ENCODE measurements at regions of chr7 and their contacts with region 1.

Region 1: DNA sequence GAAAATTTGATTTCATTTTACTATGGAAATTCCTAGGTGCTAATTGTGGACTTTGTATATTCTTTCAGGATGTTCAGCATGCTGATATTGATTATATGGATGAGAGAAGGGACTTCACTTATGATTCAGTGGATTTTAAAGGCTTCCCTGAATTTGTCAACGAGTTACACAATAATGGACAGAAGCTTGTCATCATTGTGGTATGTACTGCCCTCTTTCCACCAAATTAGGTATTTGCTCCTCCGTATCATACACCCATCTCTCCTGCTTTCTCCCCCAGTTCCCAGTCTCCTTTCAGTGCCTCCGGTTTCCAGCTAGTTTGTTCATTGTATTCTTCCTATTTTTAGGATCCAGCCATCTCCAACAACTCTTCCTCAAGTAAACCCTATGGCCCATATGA is 34.6 kb downstream of the MGAM start:
- DNase-seq: peak in 1 of 2 experiments; percentile 21
- H3K4me3 ChIP-seq: no peak overlapping the region
- H3K4me3 Mint-ChIP-seq: no peak overlapping the region
- H3K27ac Mint-ChIP-seq: no peak overlapping the region
- H3K4me1 ChIP-seq: peaks cover 4% of the 10 kb centered on the region; the same call in 1 of the 2 replicates
- H3K4me1 Mint-ChIP-seq: no peaks in the 10 kb centered on the region
- H3K27me3 ChIP-seq: no peaks in the 10 kb centered on the region
- H3K27me3 Mint-ChIP-seq: no peaks in the 10 kb centered on the region
- CTCF ChIP-seq: peak; percentile 16 to 23

Region 2: GRCh38 chr7:141906285-141906684 is 124.0 kb before region 1 on chr7:
- CTCF ChIA-PET with region 1: no interaction called
- POLR2A ChIA-PET with region 1: no interaction called
- intact Hi-C with region 1: no loop called
- DNase-seq: no peak
- H3K4me3 ChIP-seq: no peak overlapping the region
- H3K4me3 Mint-ChIP-seq: no peak overlapping the region
- H3K27ac Mint-ChIP-seq: no peak overlapping the region
- H3K4me1 ChIP-seq: no peaks in the 10 kb centered on the region
- H3K4me1 Mint-ChIP-seq: no peaks in the 10 kb centered on the region
- H3K27me3 ChIP-seq: no peaks in the 10 kb centered on the region
- H3K27me3 Mint-ChIP-seq: peaks cover 4% of the 10 kb centered on the region
- CTCF ChIP-seq: no peak

Region 3: DNA sequence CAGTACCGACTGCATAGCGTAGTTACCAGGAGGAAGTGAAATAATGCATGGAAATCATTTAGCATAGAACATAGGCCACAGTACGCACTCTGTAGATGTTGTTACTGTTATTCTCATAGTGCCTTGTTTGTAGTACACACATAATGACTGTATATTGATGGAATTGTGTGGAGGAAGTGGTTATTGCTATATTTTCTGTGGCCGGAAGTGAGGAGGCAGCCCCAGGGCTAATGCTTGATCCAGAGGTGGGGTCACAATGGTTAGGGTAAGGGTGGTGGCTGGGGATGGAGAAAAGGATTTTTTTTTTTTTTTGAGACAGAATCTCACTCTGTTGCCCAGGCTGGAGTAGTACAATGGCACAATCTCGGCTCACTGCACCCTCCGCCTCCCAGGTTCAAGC is 39.2 kb before region 1 on chr7:
- CTCF ChIA-PET with region 1: no interaction called
- POLR2A ChIA-PET with region 1: no interaction called
- intact Hi-C with region 1: no loop called
- DNase-seq: no peak
- H3K4me3 ChIP-seq: no peak overlapping the region
- H3K4me3 Mint-ChIP-seq: no peak overlapping the region
- H3K27ac Mint-ChIP-seq: no peak overlapping the region
- H3K4me1 ChIP-seq: 0 out of 2 replicates have a peak, but pooled peaks cover 4% of the 10 kb centered on the region
- H3K4me1 Mint-ChIP-seq: peaks cover 17% of the 10 kb centered on the region
- H3K27me3 ChIP-seq: no peaks in the 10 kb centered on the region
- H3K27me3 Mint-ChIP-seq: no peaks in the 10 kb centered on the region
- CTCF ChIP-seq: no peak

Region 4: DNA sequence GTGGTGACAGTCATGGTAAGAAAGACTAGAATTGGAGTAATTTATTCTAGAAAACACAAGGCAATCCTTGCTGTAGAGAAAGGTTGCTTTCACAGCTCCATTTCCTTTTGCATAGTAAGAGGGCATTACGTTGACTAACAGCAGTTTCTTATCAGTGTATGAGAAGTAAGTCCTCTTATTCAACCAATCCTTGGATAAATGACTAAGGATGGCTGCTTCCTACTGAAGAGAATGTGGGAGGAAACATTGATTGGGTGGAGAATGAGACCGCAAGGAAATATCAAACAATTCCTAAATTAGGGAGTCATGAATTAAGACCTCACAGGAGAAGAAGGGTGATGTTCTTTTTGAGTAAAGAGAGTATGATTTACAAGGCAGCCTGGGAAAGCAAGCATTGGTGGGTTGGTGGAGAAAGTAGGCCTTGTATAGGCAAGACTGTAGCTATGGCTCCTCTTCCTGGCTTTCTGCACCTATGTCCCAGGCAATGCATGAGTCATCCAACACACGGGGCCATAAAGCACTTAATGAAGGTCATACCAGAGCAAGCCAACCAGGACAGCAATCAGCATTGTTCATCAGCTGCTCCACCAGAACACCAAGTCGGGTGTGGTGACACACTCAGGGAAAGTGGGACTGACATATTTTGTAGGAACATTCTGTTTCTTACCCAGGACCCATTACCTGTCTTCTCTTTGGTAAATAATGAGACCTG is 29.0 kb before region 1 on chr7:
- CTCF ChIA-PET with region 1: no interaction called
- POLR2A ChIA-PET with region 1: no interaction called
- intact Hi-C with region 1: no loop called
- DNase-seq: peak; percentile 40 to 77
- H3K4me3 ChIP-seq: no peak overlapping the region
- H3K4me3 Mint-ChIP-seq: no peak overlapping the region
- H3K27ac Mint-ChIP-seq: no peak overlapping the region
- H3K4me1 ChIP-seq: peaks cover 17% of the 10 kb centered on the region
- H3K4me1 Mint-ChIP-seq: peaks cover 7% of the 10 kb centered on the region
- H3K27me3 ChIP-seq: no peaks in the 10 kb centered on the region
- H3K27me3 Mint-ChIP-seq: no peaks in the 10 kb centered on the region
- CTCF ChIP-seq: no peak

Region 5: DNA sequence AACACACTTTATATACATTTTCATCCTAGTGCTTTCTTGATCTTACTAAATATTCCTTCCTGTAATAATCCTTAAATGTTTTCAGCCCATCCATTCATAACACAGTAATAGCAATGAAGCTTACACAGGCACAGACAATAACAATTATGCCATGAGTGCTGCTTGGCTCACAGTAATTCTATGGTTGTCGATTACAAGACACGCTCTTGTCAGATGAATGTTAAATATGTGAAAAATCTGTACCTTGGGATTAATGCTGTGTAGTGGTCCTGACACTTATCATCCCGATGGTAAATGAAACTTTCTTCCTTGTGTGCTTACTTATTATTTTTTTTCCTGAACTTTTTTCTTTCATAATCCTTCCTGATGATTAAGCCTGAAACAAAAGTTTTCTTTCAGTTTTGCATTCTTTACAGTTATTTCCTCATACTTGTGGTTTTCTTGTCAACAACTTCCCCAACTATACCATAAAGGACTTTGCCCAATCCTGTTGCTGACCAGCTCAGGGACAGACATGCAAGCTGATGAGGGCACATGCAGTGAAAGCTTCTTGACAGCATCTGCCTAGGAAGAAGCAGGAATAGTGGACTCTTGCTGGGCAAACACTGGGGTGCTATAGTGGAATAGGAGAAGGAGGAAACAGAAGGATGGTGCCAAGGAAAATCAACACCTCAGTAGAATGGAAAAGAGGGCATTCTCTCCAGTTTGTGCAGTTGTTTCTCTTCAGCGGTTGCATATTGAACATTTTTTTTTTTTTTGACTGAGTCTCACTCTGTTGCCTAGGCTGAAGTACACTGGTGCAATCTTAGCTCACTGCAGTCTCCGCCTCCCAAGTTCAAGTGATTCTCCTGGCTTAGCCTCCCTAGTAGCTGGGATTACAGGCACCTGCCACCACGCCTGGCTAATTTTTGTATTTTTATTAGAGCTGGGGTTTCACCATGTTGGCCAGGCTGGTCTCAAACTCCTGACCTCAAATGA is 74.5 kb after region 1 on chr7:
- CTCF ChIA-PET with region 1: no interaction called
- POLR2A ChIA-PET with region 1: no interaction called
- intact Hi-C with region 1: no loop called
- DNase-seq: peak; percentile 73 to 86
- H3K4me3 ChIP-seq: no peak overlapping the region
- H3K4me3 Mint-ChIP-seq: peak overlapping the region; percentile 57
- H3K27ac Mint-ChIP-seq: peak overlapping the region; percentile 92
- H3K4me1 ChIP-seq: peaks cover 45% of the 10 kb centered on the region
- H3K4me1 Mint-ChIP-seq: peaks cover 39% of the 10 kb centered on the region
- H3K27me3 ChIP-seq: no peaks in the 10 kb centered on the region
- H3K27me3 Mint-ChIP-seq: no peaks in the 10 kb centered on the region
- CTCF ChIP-seq: no peak

Region 6: GRCh38 chr7:142188846-142189245 is 158.6 kb after region 1 on chr7:
- CTCF ChIA-PET with region 1: no interaction called
- POLR2A ChIA-PET with region 1: no interaction called
- intact Hi-C with region 1: loop called (anchors 1 kb)
- DNase-seq: peak in 1 of 2 experiments; percentile 19
- H3K4me3 ChIP-seq: no peak overlapping the region
- H3K4me3 Mint-ChIP-seq: no peak overlapping the region
- H3K27ac Mint-ChIP-seq: no peak overlapping the region
- H3K4me1 ChIP-seq: no peaks in the 10 kb centered on the region
- H3K4me1 Mint-ChIP-seq: peaks cover 6% of the 10 kb centered on the region
- H3K27me3 ChIP-seq: no peaks in the 10 kb centered on the region
- H3K27me3 Mint-ChIP-seq: no peaks in the 10 kb centered on the region
- CTCF ChIP-seq: peak; percentile 40 to 56